ENCODE measurements at regions of chr7 and their contacts with region 1.

Region 1: DNA sequence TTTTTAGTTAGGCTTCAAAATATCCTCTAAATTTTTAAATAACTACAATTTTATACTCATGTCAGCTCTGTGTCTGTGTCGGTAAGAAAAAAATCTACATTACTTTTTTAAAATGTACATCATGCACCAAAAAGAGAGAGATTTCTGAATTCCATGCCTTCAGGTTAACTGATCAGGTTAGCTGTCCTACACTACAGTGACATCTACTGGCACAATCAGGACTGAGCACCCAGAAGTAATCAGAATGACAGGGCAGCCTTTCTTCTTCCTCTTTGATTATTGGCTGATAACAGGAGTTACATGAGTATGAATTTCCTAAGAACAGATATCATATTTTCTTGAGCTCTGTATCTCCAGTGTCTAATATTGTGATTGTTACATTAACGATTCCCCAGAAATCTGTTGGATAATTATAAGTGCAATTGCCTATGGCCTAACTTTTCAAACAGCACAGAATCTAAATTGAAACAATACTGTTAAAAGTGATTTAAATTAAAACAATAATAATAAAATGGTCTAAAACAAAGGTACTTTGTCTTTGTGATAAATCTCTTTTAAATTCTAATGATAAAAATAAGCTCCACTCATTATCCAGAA is 41.8 kb upstream of the HYCC1 start:
- DNase-seq: peak; percentile 49 to 61
- H3K4me3 ChIP-seq: no peak overlapping the region
- H3K27ac ChIP-seq: no peak overlapping the region
- H3K4me1 ChIP-seq: no peaks in the 10 kb centered on the region
- H3K27me3 ChIP-seq: no peaks in the 10 kb centered on the region
- CTCF ChIP-seq: peak; percentile 98

Region 2: DNA sequence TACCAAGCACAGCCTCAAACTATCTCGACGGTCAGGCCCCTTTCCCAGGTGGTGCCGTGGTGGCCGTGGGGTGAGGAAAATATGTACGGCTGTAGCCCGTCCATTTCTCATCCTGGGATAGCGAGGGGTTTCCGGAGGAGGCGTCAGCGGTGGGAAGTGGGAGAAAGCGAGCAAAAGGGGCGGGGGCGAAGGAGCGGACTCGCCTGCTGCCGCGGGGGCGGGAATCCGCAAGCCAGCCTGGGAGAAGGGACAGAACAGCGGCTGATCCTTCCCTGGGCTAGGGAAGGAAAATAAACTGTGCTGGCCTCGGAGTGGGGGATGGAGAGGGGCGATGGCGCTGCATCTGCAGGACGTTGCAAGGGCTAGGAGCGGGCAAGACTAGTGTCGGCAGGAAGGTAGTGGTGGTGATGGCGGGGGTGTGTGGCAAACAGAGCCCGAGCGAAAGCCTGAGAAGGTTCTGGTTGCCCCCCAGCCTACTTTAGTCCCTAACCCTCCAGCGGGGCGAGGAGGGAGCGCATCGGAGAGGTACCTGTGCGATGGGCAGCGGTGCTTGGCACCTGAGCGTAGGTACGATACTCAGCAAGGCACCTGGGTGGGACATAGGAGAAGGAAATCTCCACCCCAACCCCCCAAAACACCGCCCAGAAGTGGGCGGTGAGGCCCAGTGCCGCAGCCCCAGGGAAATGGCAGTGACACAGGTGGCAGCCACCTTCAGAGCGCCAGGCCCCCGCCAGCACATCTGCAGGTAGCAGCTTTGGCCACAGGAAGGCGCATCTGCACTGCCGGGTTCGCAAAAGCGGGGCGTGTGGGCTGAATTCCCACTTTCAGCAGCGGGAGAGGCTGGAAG is 505.8 kb before region 1 on chr7:
- CTCF ChIA-PET with region 1: interaction called, 3 read pairs
- POLR2A ChIA-PET with region 1: no interaction called
- intact Hi-C with region 1: loop called (anchors 1 kb)
- DNase-seq: peak in 1 of 2 experiments; percentile 79
- H3K4me3 ChIP-seq: no peak overlapping the region
- H3K27ac ChIP-seq: no peak overlapping the region
- H3K4me1 ChIP-seq: no peaks in the 10 kb centered on the region
- H3K27me3 ChIP-seq: no peaks in the 10 kb centered on the region
- CTCF ChIP-seq: peak; percentile 65

Region 3: DNA sequence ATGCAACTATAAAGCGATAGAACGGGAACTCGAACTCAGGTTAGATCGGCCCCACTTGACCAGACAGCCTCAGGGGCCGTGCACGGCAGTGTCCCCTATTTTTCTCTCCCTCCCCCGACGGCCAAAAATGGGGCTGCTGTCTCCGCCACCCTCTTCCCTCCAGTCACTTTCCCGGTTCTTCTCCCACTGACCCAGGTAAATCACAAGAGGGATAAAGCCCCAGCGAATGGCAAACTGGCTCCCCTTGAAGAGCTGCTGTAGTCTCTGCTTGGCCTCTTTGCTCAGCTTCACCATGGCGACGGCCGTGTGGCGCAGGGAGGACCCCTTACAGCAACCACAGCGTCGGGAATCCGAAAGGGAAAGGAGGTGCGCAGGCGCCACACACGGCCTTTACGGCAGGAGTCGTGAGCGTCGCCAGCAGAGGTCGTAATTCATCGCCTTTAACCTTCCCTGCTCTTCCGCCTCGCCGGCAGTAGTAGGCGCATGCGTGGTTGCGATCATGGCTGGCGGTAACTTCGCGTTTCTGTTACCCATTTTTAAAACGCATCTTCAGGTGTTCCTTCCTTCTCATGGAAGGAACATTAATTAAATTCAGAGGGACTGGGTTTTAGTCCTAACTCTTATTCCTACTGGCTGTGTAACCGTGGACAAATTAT is 233.1 kb before region 1 on chr7 and contains the start of gene TOMM7:
- CTCF ChIA-PET with region 1: interaction called, 4 read pairs
- POLR2A ChIA-PET with region 1: no interaction called
- intact Hi-C with region 1: loop called (anchors 1 kb)
- DNase-seq: peak; percentile 90 to 94
- H3K4me3 ChIP-seq: peak within 1 kb of the TSS; percentile 99
- H3K27ac ChIP-seq: peak within 1 kb of the TSS; percentile 33
- H3K4me1 ChIP-seq: peaks cover 29% of the 10 kb centered on the region
- H3K27me3 ChIP-seq: no peaks in the 10 kb centered on the region
- CTCF ChIP-seq: peak; percentile 65
- total RNA-seq, gene TOMM7: 588 and 703 TPM in 2 replicates

Region 4: DNA sequence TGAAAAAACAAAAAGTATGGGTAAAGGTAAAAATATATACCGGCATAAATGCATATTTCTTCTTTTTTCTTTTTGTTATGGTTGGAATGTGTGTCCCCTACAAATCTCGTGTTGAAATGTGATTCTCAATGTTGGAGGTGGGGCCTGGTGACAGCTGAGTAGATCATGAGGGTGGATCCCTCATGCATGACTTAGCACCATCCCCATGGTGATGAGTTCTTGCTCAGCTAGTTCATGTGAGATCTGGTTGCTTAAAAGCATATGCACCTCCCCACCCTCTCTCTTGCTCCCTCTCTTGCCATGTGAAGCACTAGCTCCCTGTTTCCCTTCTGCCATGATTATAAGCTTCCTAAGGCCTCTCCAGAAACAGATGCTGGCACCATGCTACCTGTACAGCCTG is 135.0 kb before region 1 on chr7:
- CTCF ChIA-PET with region 1: no interaction called
- POLR2A ChIA-PET with region 1: no interaction called
- intact Hi-C with region 1: no loop called
- DNase-seq: no peak
- H3K4me3 ChIP-seq: no peak overlapping the region
- H3K27ac ChIP-seq: no peak overlapping the region
- H3K4me1 ChIP-seq: no peaks in the 10 kb centered on the region; the same call in 1 of the 2 replicates
- H3K27me3 ChIP-seq: no peaks in the 10 kb centered on the region
- CTCF ChIP-seq: no peak

Region 5: DNA sequence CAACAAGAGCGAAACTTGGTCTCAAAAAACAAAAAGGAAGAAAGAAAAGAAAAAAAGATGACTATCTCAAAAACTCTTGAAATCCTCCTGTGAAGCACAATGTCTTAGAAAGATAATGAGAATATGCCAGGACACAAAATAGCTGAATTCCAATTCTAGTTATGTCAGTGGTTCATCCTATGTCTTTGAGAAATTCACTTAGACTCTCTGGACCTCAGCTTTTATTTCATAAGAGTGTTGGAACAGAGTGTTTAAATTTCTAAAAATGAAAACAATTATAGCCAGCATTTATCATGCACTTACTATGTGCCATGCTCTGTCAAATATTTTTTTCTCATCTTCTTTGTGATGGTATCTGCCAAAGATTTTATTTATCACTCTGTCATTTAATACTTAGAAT is 28.4 kb before region 1 on chr7:
- CTCF ChIA-PET with region 1: no interaction called
- POLR2A ChIA-PET with region 1: no interaction called
- intact Hi-C with region 1: no loop called
- DNase-seq: peak in 1 of 2 experiments; percentile 29
- H3K4me3 ChIP-seq: no peak overlapping the region
- H3K27ac ChIP-seq: no peak overlapping the region
- H3K4me1 ChIP-seq: no peaks in the 10 kb centered on the region
- H3K27me3 ChIP-seq: no peaks in the 10 kb centered on the region
- CTCF ChIP-seq: no peak

Region 6: GRCh38 chr7:23445326-23445725 is 389.6 kb after region 1 on chr7:
- CTCF ChIA-PET with region 1: no interaction called
- POLR2A ChIA-PET with region 1: no interaction called
- intact Hi-C with region 1: no loop called
- DNase-seq: no peak
- H3K4me3 ChIP-seq: no peak overlapping the region
- H3K27ac ChIP-seq: peak overlapping the region; percentile 5
- H3K4me1 ChIP-seq: no peaks in the 10 kb centered on the region
- H3K27me3 ChIP-seq: no peaks in the 10 kb centered on the region
- CTCF ChIP-seq: no peak

Region 7: GRCh38 chr7:23570592-23571200 is 515.0 kb after region 1 on chr7:
- CTCF ChIA-PET with region 1: no interaction called
- POLR2A ChIA-PET with region 1: no interaction called
- intact Hi-C with region 1: no loop called
- DNase-seq: peak; percentile 77 to 81
- H3K4me3 ChIP-seq: no peak overlapping the region
- H3K27ac ChIP-seq: no peak overlapping the region
- H3K4me1 ChIP-seq: no peaks in the 10 kb centered on the region
- H3K27me3 ChIP-seq: no peaks in the 10 kb centered on the region
- CTCF ChIP-seq: peak; percentile 96

Region 8: DNA sequence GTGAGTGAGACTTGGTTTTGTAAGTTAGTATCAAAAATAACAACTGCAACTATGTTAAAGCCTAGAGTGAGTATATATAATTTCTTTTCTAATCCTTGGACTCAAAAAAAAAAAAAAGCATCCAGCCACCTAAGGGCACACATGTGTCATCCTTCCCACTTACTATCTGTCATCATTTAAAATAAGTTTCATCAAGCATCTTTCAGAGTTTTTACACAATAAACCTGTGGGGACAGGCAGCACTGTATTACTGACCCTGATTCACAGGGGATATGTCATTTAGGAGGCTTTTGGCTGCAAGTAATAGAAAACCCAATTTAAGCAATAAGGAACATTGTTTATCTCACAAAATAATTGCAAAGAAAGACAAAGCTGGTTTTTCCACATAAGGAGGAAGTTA is 1956.6 kb after region 1 on chr7:
- CTCF ChIA-PET with region 1: interaction called, 18 read pairs
- POLR2A ChIA-PET with region 1: no interaction called
- intact Hi-C with region 1: no loop called
- DNase-seq: no peak
- H3K4me3 ChIP-seq: no peak overlapping the region
- H3K27ac ChIP-seq: no peak overlapping the region
- H3K4me1 ChIP-seq: peaks cover 13% of the 10 kb centered on the region; the same call in 1 of the 2 replicates
- H3K27me3 ChIP-seq: no peaks in the 10 kb centered on the region
- CTCF ChIP-seq: no peak

Measured in PC-9 (cell line).